CD14-positive monocyte (primary cell): ENCODE measurements at regions of chr1 and their contacts with region 1.

Region 1: GRCh38 chr1:156060937-156061636 is at the start of gene RAB25:
- DNase-seq: no peak
- H3K4me3 ChIP-seq: no peak within 1 kb of the TSS
- H3K4me3 Mint-ChIP-seq: no peak within 1 kb of the TSS
- H3K27ac ChIP-seq: no peak within 1 kb of the TSS
- H3K27ac Mint-ChIP-seq: peak within 1 kb of the TSS in 1 of 7 donors; percentile 41
- H3K4me1 ChIP-seq: peaks cover 5% of the 10 kb centered on the region in 2 donors
- H3K4me1 Mint-ChIP-seq: peaks cover 9% of the 10 kb centered on the region
- H3K27me3 ChIP-seq: no peaks in the 10 kb centered on the region
- H3K27me3 Mint-ChIP-seq: peaks cover 0 to 3% (median 3%) of the 10 kb centered on the region in 3 donors
- CTCF ChIP-seq: no peak
- polyA plus RNA-seq, gene RAB25: 0.23 TPM in 1 of 3 donors, not detected in the others

Region 2: GRCh38 chr1:155934097-155934935 is 126.8 kb before region 1 on chr1 and contains the start of gene KHDC4:
- intact Hi-C with region 1: loop called in 1 of 2 experiments (anchors 5 kb)
- DNase-seq: peak; percentile 98 to 99 (median 99)
- H3K4me3 ChIP-seq: peak within 1 kb of the TSS; percentile 63 to 96 (median 94)
- H3K4me3 Mint-ChIP-seq: no peak within 1 kb of the TSS
- H3K27ac ChIP-seq: peak within 1 kb of the TSS; percentile 88 to 94
- H3K27ac Mint-ChIP-seq: peak within 1 kb of the TSS in 1 of 7 donors; percentile 87
- H3K4me1 ChIP-seq: peaks cover 22 to 44% of the 10 kb centered on the region in 2 donors
- H3K4me1 Mint-ChIP-seq: peaks cover 25% of the 10 kb centered on the region
- H3K27me3 ChIP-seq: no peaks in the 10 kb centered on the region
- H3K27me3 Mint-ChIP-seq: peaks cover 0 to 2% (median 0%) of the 10 kb centered on the region in 3 donors
- CTCF ChIP-seq: peak; percentile 28
- polyA plus RNA-seq, gene KHDC4: 3.4 to 22.0 (median 3.5) TPM

Region 3: DNA sequence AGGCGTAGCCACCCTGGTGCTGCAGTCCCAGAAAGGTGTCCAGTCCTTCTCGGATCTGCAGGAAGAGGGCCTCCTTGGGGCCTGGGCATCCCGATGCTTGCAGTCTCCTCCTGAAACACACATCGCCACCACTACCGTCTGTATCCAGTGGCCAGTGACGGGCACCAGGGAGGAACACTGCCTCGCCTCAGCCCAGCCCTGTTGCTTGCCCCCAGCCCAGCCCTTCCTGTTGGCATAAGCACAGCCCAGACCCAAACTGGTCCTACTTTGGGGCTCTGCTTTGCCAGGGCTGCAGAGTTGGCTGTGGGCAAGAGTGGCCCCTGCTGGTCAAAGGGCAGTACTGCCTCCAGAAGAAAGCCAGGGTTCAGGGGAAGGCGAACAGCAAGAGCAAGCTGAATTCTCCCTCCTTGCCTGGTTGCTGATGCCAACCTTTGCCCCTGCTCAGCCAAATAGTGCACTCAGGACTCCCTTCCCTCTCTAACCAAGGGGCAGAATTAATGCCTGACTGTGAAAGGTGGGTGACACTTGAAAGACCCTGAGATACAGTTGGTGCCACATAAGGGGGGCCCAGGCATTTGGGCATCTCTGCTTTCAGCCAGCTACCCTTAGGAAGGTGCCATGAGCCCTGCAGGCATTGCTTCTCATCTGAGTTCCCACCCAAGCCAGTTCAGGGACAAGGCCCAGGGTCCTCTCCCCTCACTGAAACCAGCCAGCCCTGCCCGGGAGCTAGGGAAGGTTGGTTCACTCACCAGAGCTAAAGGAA is 71.7 kb before region 1 on chr1:
- intact Hi-C with region 1: no loop called
- DNase-seq: peak; percentile 80 to 89 (median 85)
- H3K4me3 ChIP-seq: peak overlapping the region; percentile 28 to 72 (median 35)
- H3K4me3 Mint-ChIP-seq: peak overlapping the region; percentile 79 to 89
- H3K27ac ChIP-seq: peak overlapping the region; percentile 94 to 97
- H3K27ac Mint-ChIP-seq: peak overlapping the region; percentile 97 to 100 (median 99)
- H3K4me1 ChIP-seq: peaks cover 40 to 41% of the 10 kb centered on the region in 2 donors
- H3K4me1 Mint-ChIP-seq: peaks cover 50% of the 10 kb centered on the region
- H3K27me3 ChIP-seq: no peaks in the 10 kb centered on the region
- H3K27me3 Mint-ChIP-seq: no peaks in the 10 kb centered on the region
- CTCF ChIP-seq: peak; percentile 99

Region 4: GRCh38 chr1:156001682-156002171 is 59.4 kb before region 1 on chr1:
- intact Hi-C with region 1: loop called in 1 of 2 experiments (anchors 10 kb)
- DNase-seq: no peak
- H3K4me3 ChIP-seq: no peak overlapping the region
- H3K4me3 Mint-ChIP-seq: no peak overlapping the region
- H3K27ac ChIP-seq: no peak overlapping the region
- H3K27ac Mint-ChIP-seq: peak overlapping the region in 2 of 7 donors; percentile 4 to 42
- H3K4me1 ChIP-seq: peaks cover 5 to 8% of the 10 kb centered on the region in 2 donors
- H3K4me1 Mint-ChIP-seq: peaks cover 6% of the 10 kb centered on the region
- H3K27me3 ChIP-seq: no peaks in the 10 kb centered on the region
- H3K27me3 Mint-ChIP-seq: peaks cover 0 to 3% (median 2%) of the 10 kb centered on the region in 3 donors
- CTCF ChIP-seq: no peak